GM12878 (cell line): ENCODE measurements at regions of chr7 and their contacts with region 1.

Region 1: GRCh38 chr7:130961128-130961601 is 227.2 kb upstream of the KLF14 start:
- DNase-seq: peak; percentile 98
- ATAC-seq: peak; percentile 82
- H3K4me3 ChIP-seq: peak overlapping the region; percentile 72
- H3K27ac ChIP-seq: peak overlapping the region; percentile 93
- H3K4me1 ChIP-seq: peaks cover 17% of the 10 kb centered on the region
- H3K27me3 ChIP-seq: no peaks in the 10 kb centered on the region
- CTCF ChIP-seq: no peak
- EP300 ChIP-seq: peak; percentile 90 to 91
- POLR2A ChIP-seq: peak; percentile 95
- RAD21 ChIP-seq: no peak

Region 2: DNA sequence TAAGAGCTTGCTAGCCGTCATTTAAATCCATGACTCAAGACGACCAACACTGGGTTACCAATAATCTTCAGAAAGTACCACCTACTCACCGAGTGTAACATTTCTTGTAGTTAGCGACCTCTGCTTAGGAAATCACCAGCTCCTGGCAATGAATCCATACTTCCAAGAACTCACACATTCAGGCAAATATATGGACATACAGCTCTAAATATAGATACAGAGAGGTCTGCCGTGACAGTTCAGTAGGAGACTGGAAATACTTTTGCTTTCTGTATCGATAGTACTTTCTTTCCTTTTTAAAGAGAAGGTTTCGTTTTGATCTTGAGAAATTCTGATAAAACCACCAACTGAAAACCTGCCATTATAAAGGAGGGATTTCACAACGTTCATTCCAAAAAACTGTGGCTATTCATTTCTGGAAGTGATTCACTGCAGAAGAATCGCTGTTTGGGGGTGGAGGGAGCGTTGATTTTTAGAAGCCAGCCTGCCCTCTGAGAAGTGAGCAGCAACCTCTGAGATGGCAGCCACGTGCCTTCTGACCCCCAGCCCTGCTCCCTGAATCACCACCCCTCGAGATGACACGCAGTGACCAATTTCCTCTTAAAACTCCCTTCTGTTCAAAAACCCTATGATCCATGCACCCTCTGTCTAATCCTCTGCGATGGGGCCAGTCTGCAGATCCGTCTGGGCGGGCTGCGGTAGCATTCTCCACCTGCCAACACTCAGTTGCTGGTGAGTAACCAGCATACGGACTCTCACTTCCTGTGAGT is 48.1 kb before region 1 on chr7:
- CTCF ChIA-PET with region 1: interaction called, 3 read pairs
- POLR2A ChIA-PET with region 1: interaction called, 20 read pairs
- RAD21 ChIA-PET with region 1: interaction called, 33 read pairs
- SMC1A ChIA-PET with region 1: interaction called, 45 read pairs
- in situ Hi-C with region 1: no loop called
- intact Hi-C with region 1: loop called (anchors 2 kb)
- DNase-seq: peak; percentile 80
- ATAC-seq: peak; percentile 95
- H3K4me3 ChIP-seq: peak overlapping the region; percentile 58
- H3K27ac ChIP-seq: peak overlapping the region; percentile 94
- H3K4me1 ChIP-seq: peaks cover 44% of the 10 kb centered on the region
- H3K27me3 ChIP-seq: no peaks in the 10 kb centered on the region
- CTCF ChIP-seq: no peak
- EP300 ChIP-seq: peak; percentile 39 to 78
- POLR2A ChIP-seq: peak; percentile 66
- RAD21 ChIP-seq: no peak

Region 3: GRCh38 chr7:130943336-130943901 is 17.7 kb before region 1 on chr7:
- CTCF ChIA-PET with region 1: interaction called, 106 read pairs
- POLR2A ChIA-PET with region 1: interaction called, 67 read pairs
- RAD21 ChIA-PET with region 1: interaction called, 94 read pairs
- SMC1A ChIA-PET with region 1: interaction called, 145 read pairs
- in situ Hi-C with region 1: no loop called
- intact Hi-C with region 1: no loop called
- DNase-seq: no peak
- ATAC-seq: peak; percentile 22
- H3K4me3 ChIP-seq: peak overlapping the region; percentile 39
- H3K27ac ChIP-seq: peak overlapping the region; percentile 78
- H3K4me1 ChIP-seq: peaks cover 36% of the 10 kb centered on the region
- H3K27me3 ChIP-seq: no peaks in the 10 kb centered on the region
- CTCF ChIP-seq: no peak
- EP300 ChIP-seq: peak in 1 of 2 experiments; percentile 43; a peak in 2 of 4 replicates
- POLR2A ChIP-seq: no peak
- RAD21 ChIP-seq: no peak

Region 4: GRCh38 chr7:131007394-131008330 is 46.5 kb after region 1 on chr7:
- CTCF ChIA-PET with region 1: interaction called, 18 read pairs
- POLR2A ChIA-PET with region 1: interaction called, 3 read pairs
- RAD21 ChIA-PET with region 1: interaction called, 8 read pairs
- SMC1A ChIA-PET with region 1: interaction called, 10 read pairs
- in situ Hi-C with region 1: no loop called
- intact Hi-C with region 1: loop called (anchors 2 kb)
- DNase-seq: peak; percentile 63
- ATAC-seq: peak; percentile 64
- H3K4me3 ChIP-seq: peak overlapping the region; percentile 22; the same call in 1 of the 2 replicates
- H3K27ac ChIP-seq: peak overlapping the region; percentile 89
- H3K4me1 ChIP-seq: peaks cover 48% of the 10 kb centered on the region
- H3K27me3 ChIP-seq: no peaks in the 10 kb centered on the region
- CTCF ChIP-seq: peak; percentile 46 to 66 (median 54)
- EP300 ChIP-seq: no peak
- POLR2A ChIP-seq: peak; percentile 64
- RAD21 ChIP-seq: peak; percentile 80

Region 5: GRCh38 chr7:131021460-131021859 is 60.3 kb after region 1 on chr7:
- CTCF ChIA-PET with region 1: interaction called, 5 read pairs
- POLR2A ChIA-PET with region 1: interaction called, 11 read pairs
- RAD21 ChIA-PET with region 1: interaction called, 10 read pairs
- SMC1A ChIA-PET with region 1: interaction called, 21 read pairs
- in situ Hi-C with region 1: no loop called
- intact Hi-C with region 1: no loop called
- DNase-seq: no peak
- ATAC-seq: peak; percentile 78
- H3K4me3 ChIP-seq: peak overlapping the region; percentile 33
- H3K27ac ChIP-seq: peak overlapping the region; percentile 80
- H3K4me1 ChIP-seq: peaks cover 40% of the 10 kb centered on the region
- H3K27me3 ChIP-seq: no peaks in the 10 kb centered on the region
- CTCF ChIP-seq: no peak
- EP300 ChIP-seq: peak in 1 of 2 experiments; percentile 17; a peak in 1 of 4 replicates
- POLR2A ChIP-seq: no peak; the same call in 1 of the 2 replicates
- RAD21 ChIP-seq: no peak

Region 6: GRCh38 chr7:131027287-131027773 is 66.2 kb after region 1 on chr7:
- CTCF ChIA-PET with region 1: interaction called, 8 read pairs
- POLR2A ChIA-PET with region 1: interaction called, 3 read pairs
- RAD21 ChIA-PET with region 1: interaction called, 10 read pairs
- SMC1A ChIA-PET with region 1: interaction called, 21 read pairs
- in situ Hi-C with region 1: no loop called
- intact Hi-C with region 1: loop called (anchors 1 kb)
- DNase-seq: no peak
- ATAC-seq: peak; percentile 46
- H3K4me3 ChIP-seq: no peak overlapping the region
- H3K27ac ChIP-seq: peak overlapping the region; percentile 61
- H3K4me1 ChIP-seq: peaks cover 53% of the 10 kb centered on the region
- H3K27me3 ChIP-seq: no peaks in the 10 kb centered on the region
- CTCF ChIP-seq: no peak
- EP300 ChIP-seq: no peak
- POLR2A ChIP-seq: peak; percentile 38; the same call in 1 of the 2 replicates
- RAD21 ChIP-seq: 0 out of 2 replicates have a peak, but pooled peaks have one; percentile 22

Region 7: GRCh38 chr7:131124867-131125266 is 163.7 kb after region 1 on chr7:
- CTCF ChIA-PET with region 1: no interaction called
- POLR2A ChIA-PET with region 1: no interaction called
- RAD21 ChIA-PET with region 1: no interaction called
- SMC1A ChIA-PET with region 1: no interaction called
- in situ Hi-C with region 1: no loop called
- intact Hi-C with region 1: no loop called
- DNase-seq: no peak
- ATAC-seq: no peak
- H3K4me3 ChIP-seq: no peak overlapping the region
- H3K27ac ChIP-seq: peak overlapping the region; percentile 77
- H3K4me1 ChIP-seq: peaks cover 24% of the 10 kb centered on the region
- H3K27me3 ChIP-seq: no peaks in the 10 kb centered on the region
- CTCF ChIP-seq: no peak
- EP300 ChIP-seq: no peak
- POLR2A ChIP-seq: no peak
- RAD21 ChIP-seq: no peak

Region 8: DNA sequence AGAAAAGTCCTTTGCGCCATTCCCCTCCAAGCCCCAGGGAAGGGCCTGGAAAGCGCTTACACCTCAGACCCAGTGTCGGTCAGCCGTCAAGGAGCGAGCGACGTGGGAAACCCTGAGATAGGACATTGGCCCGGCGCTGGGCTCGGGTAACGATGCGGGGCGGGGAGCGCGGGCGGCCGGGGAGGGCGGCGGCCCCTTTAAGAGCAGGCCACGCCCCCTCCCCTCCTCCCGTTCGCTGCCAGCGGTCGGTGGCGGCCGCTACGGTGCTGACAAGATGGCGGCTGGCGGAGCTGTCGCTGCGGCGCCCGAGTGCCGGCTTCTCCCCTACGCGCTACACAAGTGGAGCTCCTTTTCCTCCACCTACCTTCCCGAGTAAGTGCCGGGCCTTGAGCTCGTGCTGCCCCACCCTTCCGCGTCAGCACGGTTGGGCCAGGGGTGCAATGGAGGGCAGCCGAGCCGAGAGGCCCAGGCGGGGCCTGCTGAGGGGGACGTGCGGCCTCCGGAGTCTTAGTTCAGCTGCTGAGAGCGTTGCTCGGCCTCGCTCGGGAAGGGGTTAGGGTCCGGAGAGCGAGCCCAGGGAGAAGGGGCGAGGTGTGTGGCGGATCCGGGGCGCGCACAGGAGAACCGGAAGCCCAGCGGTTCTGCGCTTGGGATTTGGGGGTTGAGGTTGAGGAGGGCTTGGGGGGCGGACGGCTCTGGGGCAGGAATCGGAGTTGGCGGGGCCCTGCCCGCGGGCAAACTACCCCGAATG is 366.6 kb after region 1 on chr7 and contains the start of gene MKLN1:
- CTCF ChIA-PET with region 1: no interaction called
- POLR2A ChIA-PET with region 1: no interaction called
- RAD21 ChIA-PET with region 1: no interaction called
- SMC1A ChIA-PET with region 1: interaction called, 3 read pairs
- in situ Hi-C with region 1: no loop called
- intact Hi-C with region 1: loop called (anchors 10 kb)
- DNase-seq: peak; percentile 35
- ATAC-seq: peak; percentile 95
- H3K4me3 ChIP-seq: peak within 1 kb of the TSS; percentile 88
- H3K27ac ChIP-seq: peak within 1 kb of the TSS; percentile 97
- H3K4me1 ChIP-seq: 0 out of 2 replicates have a peak, but pooled peaks cover 3% of the 10 kb centered on the region
- H3K27me3 ChIP-seq: no peaks in the 10 kb centered on the region
- CTCF ChIP-seq: no peak
- EP300 ChIP-seq: peak in 1 of 2 experiments; percentile 22; a peak in 1 of 4 replicates
- POLR2A ChIP-seq: peak; percentile 99
- RAD21 ChIP-seq: no peak
- polyA plus RNA-seq, gene MKLN1: 16.4 to 31.8 TPM